ENCODE measurements at regions of chr3 and their contacts with region 1.

Region 1: GRCh38 chr3:18208856-18209255 is 216.3 kb downstream of the SATB1 start:
- DNase-seq: peak; percentile 19
- ATAC-seq: no peak
- H3K4me3 Mint-ChIP-seq: no peak overlapping the region
- H3K27ac Mint-ChIP-seq: peak overlapping the region; percentile 64
- H3K4me1 Mint-ChIP-seq: peaks cover 21% of the 10 kb centered on the region
- H3K27me3 Mint-ChIP-seq: peaks cover 15% of the 10 kb centered on the region

Region 2: DNA sequence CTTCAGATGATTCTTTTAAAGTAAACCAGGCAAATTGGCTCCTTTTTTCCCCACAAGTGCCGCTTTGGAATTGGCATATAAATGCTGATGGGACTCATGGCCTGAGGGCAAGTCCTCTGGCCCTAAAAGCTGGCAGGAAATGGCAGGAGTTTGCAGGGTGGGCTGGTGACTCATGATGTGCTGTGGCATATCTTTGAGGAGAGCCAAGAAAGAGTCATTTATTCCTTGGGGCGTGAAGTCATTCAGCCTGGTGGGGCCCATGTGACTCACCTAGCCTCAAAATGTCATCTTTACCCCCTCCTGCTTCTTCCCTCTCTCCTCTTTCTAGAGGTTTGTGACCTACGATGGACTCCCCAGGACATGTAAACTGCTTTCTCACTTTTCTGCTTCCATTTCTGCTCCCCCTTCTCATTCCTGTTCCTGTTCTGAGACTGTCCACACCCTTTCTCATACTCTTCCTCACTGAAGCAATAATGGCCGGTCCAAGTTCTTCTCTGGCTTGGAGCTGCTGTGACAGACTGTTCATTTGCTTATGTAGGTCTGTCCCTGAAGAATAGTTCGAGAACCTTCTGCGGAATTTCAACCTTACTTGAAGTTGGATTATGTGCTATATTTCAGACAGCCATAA is 109.8 kb before region 1 on chr3:
- CTCF ChIA-PET with region 1: no interaction called
- POLR2A ChIA-PET with region 1: no interaction called
- intact Hi-C with region 1: loop called in 1 of 2 experiments (anchors 1 kb)
- DNase-seq: peak; percentile 82
- ATAC-seq: peak; percentile 94
- H3K4me3 Mint-ChIP-seq: peak overlapping the region; percentile 5
- H3K27ac Mint-ChIP-seq: peak overlapping the region; percentile 83
- H3K4me1 Mint-ChIP-seq: peaks cover 24% of the 10 kb centered on the region
- H3K27me3 Mint-ChIP-seq: peaks cover 7% of the 10 kb centered on the region

Region 3: GRCh38 chr3:18237251-18238005 is 28.6 kb after region 1 on chr3:
- CTCF ChIA-PET with region 1: interaction called, 3 read pairs
- POLR2A ChIA-PET with region 1: no interaction called
- intact Hi-C with region 1: loop called (anchors 2 kb)
- DNase-seq: peak; percentile 21
- ATAC-seq: peak; percentile 90
- H3K4me3 Mint-ChIP-seq: no peak overlapping the region
- H3K27ac Mint-ChIP-seq: no peak overlapping the region
- H3K4me1 Mint-ChIP-seq: peaks cover 10% of the 10 kb centered on the region
- H3K27me3 Mint-ChIP-seq: peaks cover 19% of the 10 kb centered on the region

Measured in activated CD4-positive, alpha-beta T cell treated with anti-CD3 and anti-CD28 coated beads for 36 hours (primary cell).